ENCODE measurements at regions of chr14 and their contacts with region 1.

Region 1: DNA sequence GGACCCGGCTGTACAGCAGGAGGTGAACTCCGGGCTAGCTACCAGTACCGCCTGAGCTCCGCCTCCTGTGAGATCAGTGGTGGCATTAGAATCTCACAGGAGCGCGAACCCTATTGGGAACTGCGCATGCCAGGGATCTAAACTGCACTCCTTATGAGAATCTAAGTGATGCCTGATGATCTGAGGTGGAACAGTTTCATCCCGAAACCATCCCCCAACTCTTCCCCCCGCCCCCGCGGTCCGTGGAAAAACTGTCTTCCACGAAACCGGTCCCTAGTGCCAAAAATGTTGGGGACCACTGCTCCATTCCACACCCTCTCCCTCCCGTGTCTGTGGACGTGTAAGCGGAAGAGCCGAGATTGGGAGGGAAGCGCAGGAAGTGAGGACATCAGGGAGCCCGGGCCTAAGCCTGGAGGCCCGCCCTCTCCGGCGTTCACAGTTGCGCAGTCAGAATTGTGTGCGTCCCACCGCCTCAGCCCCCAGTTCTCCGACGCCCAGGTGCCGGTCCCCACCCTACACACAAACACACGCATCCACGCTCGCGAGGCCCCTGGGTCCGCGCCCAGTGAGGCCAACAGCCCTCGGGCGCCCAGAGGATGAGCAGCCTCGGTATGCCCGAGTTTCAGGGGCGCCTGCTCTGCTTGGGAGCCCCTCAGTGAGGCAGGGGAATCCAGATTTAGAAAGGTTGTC is 1.8 kb upstream of the RNASE4 start:
- DNase-seq: peak; percentile 94 to 95
- ATAC-seq: peak; percentile 92
- H3K4me3 ChIP-seq: peak overlapping the region; percentile 56 to 96
- H3K27ac ChIP-seq: peak overlapping the region; percentile 78 to 100
- H3K4me1 ChIP-seq: peaks cover 0 to 2% of the 10 kb centered on the region in 2 donors
- H3K27me3 ChIP-seq: no peaks in the 10 kb centered on the region

Region 2: DNA sequence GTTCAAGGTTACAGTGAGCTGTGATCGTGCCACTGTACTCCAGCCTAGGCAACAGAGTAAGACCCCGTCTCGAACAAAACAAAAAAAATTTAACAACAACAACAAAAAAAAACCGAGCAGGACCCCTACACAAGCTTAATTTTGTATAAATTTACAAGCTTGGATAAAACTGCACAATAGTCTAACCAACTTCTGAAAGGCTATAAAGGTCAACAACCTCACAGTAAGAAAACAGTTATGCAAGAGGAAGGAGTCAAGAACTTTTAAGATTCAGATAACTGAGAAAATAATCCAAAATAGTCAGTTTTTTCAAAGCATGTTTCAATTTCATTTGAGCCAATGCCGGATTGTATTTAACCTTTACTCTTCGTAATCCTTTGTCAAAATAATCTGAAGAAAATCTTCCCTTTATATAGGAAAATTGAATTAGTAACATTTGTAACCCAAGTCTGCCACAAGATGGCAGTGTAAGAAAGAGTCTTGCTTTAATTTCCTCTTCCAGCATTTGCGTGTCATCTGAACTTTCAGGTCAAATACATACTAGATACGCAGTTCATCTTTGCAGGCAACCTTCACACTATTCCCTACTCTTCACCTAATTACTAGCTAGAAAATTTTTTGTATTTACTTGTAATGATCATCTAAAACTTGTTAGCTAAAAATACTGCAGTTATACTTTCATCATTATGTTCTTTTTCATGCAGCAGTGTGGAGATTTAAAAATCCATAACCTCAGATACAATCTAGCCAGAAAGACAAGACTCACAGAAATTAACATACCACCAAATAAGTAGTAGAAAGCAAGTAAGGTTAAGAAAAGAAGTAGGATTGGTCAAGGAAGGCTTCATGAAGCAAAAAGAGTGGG is 355.3 kb before region 1 on chr14:
- intact Hi-C with region 1: loop called in 1 of 2 experiments (anchors 5 kb)
- DNase-seq: no peak
- ATAC-seq: peak; percentile 74
- H3K4me3 ChIP-seq: no peak overlapping the region
- H3K27ac ChIP-seq: peak overlapping the region in 1 of 2 donors; percentile 36
- H3K4me1 ChIP-seq: no peaks in the 10 kb centered on the region
- H3K27me3 ChIP-seq: no peaks in the 10 kb centered on the region

Region 3: GRCh38 chr14:20413045-20413799 is 269.4 kb before region 1 on chr14 and contains the start of gene TEP1:
- intact Hi-C with region 1: loop called (anchors 2 to 5 kb)
- DNase-seq: peak; percentile 94 to 96
- ATAC-seq: peak; percentile 96
- H3K4me3 ChIP-seq: peak within 1 kb of the TSS; percentile 87 to 96
- H3K27ac ChIP-seq: peak within 1 kb of the TSS; percentile 84 to 99
- H3K4me1 ChIP-seq: peaks cover 3 to 7% of the 10 kb centered on the region in 2 donors
- H3K27me3 ChIP-seq: no peaks in the 10 kb centered on the region
- total RNA-seq, gene TEP1: 49.0 to 62.4 TPM

Region 4: GRCh38 chr14:20469242-20469889 is 213.2 kb before region 1 on chr14 and contains the start of gene PNP:
- intact Hi-C with region 1: loop called (anchors 2 to 5 kb)
- DNase-seq: peak; percentile 94 to 95
- ATAC-seq: peak; percentile 97
- H3K4me3 ChIP-seq: peak within 1 kb of the TSS; percentile 3 to 54
- H3K27ac ChIP-seq: peak within 1 kb of the TSS in 1 of 2 donors; percentile 33
- H3K4me1 ChIP-seq: peaks cover 0 to 3% of the 10 kb centered on the region in 2 donors
- H3K27me3 ChIP-seq: no peaks in the 10 kb centered on the region
- total RNA-seq, gene PNP: 46.2 to 54.1 TPM

Region 5: DNA sequence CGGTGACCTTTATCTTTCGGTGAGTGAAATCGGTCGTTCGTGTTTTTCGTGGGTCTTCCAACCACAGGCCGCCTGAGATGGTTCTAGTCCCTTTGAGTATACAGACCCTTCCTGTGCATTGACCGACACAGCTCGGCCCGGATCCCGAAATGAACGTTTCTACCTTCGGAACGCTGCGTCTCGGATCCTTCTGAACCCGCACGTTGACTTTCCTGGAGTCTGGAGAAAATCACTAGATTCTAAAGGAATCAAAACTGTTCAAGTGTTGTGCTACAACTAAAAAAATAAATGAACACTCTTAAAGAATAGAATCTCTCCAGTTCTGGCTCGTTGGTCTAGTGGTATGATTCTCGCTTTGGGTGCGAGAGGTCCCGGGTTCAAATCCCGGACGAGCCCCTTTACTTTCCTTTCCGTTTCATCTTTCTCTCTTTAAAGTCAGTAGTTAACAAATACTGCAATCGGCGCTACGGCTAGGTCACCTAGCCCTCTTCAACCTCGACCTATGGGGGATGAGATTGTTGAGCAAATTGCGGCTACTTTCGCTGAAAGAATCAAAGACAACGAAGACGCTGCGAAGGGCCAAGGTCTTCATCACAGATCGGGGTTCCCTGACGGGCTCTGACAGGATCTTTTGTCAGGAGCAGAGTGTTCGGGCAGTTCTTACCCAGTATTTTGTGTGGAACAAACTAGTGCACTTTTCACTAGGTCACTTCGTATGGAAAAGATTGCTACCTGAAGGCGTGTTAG is 49.7 kb before region 1 on chr14:
- intact Hi-C with region 1: loop called (anchors 5 kb)
- DNase-seq: no peak
- ATAC-seq: peak; percentile 70
- H3K4me3 ChIP-seq: no peak overlapping the region
- H3K27ac ChIP-seq: no peak overlapping the region
- H3K4me1 ChIP-seq: no peaks in the 10 kb centered on the region
- H3K27me3 ChIP-seq: no peaks in the 10 kb centered on the region